CD14-positive monocyte (primary cell): ENCODE measurements at regions of chr5 and their contacts with region 1.

Region 1: DNA sequence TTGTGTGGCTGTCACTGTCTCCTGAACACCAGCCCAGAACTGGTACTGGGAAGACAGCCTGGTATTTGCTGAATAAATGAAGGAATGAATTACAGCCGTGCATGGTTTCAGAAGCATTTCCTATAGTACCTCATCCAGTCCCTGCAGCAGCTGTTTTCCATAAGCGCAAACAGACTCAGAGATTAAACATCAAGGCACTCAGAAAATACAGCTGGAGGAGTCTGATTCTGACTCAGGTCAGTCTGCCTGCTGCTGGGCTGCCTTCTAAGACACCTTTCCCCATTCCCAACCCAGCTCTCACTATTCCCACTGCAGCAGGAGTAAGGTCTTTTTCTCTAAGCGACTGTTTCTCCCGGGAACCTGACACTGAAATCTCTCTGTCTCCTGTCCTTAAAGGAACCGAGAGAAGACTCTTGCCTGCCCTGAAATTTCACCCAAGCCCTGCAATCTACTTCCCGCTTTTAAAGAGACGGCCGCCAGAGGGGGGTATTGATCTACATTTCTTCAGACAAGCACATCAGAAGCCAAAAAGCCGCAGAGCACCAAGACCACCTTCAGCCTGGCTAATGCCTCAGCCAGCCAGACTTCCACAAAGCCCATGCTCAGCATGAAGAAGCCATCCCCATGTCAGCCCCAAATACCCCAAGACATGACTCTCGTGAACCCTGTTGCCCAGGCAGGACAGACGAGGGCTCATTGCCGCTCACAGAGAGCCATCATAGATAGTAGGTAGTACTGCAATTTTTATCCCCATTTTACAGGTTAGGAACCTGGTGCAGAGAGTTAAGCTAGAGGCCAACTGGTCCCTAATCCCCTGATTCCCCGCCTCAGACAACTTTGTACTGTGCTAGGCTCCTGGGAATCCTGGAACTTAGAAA is 5.4 kb upstream of the FOXI1 start:
- DNase-seq: peak; percentile 51 to 71 (median 63)
- H3K4me3 ChIP-seq: no peak overlapping the region
- H3K4me3 Mint-ChIP-seq: no peak overlapping the region
- H3K27ac ChIP-seq: no peak overlapping the region
- H3K27ac Mint-ChIP-seq: no peak overlapping the region
- H3K4me1 ChIP-seq: peaks cover 30 to 33% of the 10 kb centered on the region in 2 donors
- H3K4me1 Mint-ChIP-seq: peaks cover 32% of the 10 kb centered on the region
- H3K27me3 ChIP-seq: no peaks in the 10 kb centered on the region
- H3K27me3 Mint-ChIP-seq: peaks cover 4 to 6% (median 4%) of the 10 kb centered on the region in 3 donors
- CTCF ChIP-seq: peak; percentile 77

Region 2: DNA sequence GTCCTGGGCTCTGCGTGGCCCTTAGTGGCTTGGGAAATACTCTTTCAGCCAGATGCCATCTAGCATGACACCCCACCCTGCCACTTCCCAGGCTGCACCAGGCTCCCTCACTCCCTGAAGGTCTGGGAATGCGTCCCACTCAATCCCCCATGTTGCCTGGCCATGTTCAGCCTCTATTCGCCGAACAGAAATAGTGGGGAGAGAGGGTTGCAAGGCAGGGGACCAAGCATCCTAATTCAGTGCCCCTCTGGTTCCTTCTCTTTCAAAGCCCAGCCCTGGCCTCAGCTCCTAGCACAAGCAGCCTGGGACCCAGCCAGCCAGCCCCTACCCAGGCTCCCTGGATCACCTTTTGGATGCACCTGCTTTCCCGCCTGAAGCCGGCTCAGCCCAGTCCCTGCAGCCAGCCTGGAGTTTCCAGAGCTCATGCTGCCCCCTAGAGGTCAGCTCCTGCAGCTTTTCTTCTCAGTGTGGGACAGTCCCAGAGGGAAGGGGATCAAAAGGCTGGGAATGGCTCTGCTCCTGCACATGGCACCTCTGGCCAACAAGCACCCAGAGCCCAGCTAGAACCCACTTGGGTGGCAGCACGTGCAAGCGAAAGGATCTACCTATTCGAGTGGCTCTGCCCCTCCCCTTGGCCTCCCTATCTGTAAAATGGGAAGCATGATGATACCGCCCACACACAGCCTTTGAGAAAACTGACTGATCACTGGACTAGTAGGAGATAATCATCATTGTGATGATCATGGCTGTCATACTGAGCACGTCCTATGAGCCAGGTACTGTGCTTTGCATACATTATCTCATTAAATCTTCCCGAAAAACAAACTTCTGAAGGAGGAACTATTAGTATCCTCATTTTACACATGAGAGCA is 83.7 kb after region 1 on chr5:
- intact Hi-C with region 1: loop called (anchors 2 kb)
- DNase-seq: peak; percentile 19 to 51 (median 51)
- H3K4me3 ChIP-seq: no peak overlapping the region
- H3K4me3 Mint-ChIP-seq: no peak overlapping the region
- H3K27ac ChIP-seq: no peak overlapping the region
- H3K27ac Mint-ChIP-seq: no peak overlapping the region
- H3K4me1 ChIP-seq: no peaks in the 10 kb centered on the region
- H3K4me1 Mint-ChIP-seq: peaks cover 2% of the 10 kb centered on the region
- H3K27me3 ChIP-seq: no peaks in the 10 kb centered on the region
- H3K27me3 Mint-ChIP-seq: peaks cover 0 to 7% (median 2%) of the 10 kb centered on the region in 3 donors
- CTCF ChIP-seq: peak; percentile 89

Region 3: DNA sequence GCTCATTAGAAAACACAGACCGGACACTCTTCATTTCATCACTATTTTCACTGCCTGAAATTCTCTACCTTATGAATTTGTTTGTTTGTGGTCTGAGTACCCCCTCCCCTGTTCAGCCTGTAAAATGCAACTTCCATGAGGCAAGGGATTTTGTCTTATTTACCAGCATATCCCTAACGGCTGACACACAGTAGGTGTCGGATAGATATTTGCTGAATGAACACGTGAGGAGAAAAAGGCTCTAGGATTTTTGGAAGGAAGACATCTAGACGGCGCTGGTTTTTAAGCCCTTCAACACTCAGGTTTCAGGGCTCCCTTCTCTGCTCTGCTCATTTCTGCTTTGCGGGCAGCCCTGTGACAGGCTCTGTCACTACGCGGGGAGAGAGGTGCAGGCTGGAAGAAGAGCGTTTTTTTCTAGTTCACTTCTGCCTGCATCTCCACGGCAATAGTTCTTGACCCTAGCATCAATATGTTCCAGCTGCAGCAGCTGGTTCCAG is 247.9 kb after region 1 on chr5:
- intact Hi-C with region 1: loop called in 1 of 2 experiments (anchors 10 kb)
- DNase-seq: peak in 2 of 3 donors; percentile 22 to 35
- H3K4me3 ChIP-seq: no peak overlapping the region
- H3K4me3 Mint-ChIP-seq: peak overlapping the region in 1 of 2 donors; percentile 46
- H3K27ac ChIP-seq: no peak overlapping the region
- H3K27ac Mint-ChIP-seq: peak overlapping the region in 4 of 7 donors; percentile 8 to 52 (median 36)
- H3K4me1 ChIP-seq: peaks cover 15 to 24% of the 10 kb centered on the region in 2 donors
- H3K4me1 Mint-ChIP-seq: peaks cover 36% of the 10 kb centered on the region
- H3K27me3 ChIP-seq: no peaks in the 10 kb centered on the region
- H3K27me3 Mint-ChIP-seq: peaks cover 0 to 1% (median under 1%) of the 10 kb centered on the region in 3 donors
- CTCF ChIP-seq: peak; percentile 38

Region 4: DNA sequence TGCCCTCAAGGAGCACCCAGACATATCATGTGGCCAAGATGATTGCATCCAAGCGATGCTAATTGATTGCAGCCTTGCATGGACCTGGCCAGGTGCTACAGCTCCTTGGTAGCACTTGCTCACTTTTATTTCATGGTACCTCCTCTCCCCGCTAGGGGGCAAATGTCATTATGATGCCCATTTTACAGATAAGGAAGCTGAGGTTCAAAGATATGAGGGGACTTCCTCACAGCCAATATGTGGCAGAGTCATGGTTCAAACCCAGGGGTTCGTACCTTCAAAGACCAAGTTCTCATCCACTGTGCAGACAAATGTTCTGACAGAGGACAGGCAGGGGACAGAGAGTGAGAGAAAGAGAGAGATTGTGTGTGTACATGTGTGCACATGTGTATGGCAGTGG is 310.8 kb after region 1 on chr5:
- intact Hi-C with region 1: loop called in 1 of 2 experiments (anchors 10 kb)
- DNase-seq: no peak
- H3K4me3 ChIP-seq: no peak overlapping the region
- H3K4me3 Mint-ChIP-seq: no peak overlapping the region
- H3K27ac ChIP-seq: no peak overlapping the region
- H3K27ac Mint-ChIP-seq: no peak overlapping the region
- H3K4me1 ChIP-seq: peaks cover 9 to 18% of the 10 kb centered on the region in 2 donors
- H3K4me1 Mint-ChIP-seq: peaks cover 18% of the 10 kb centered on the region
- H3K27me3 ChIP-seq: no peaks in the 10 kb centered on the region
- H3K27me3 Mint-ChIP-seq: peaks cover 0 to 3% (median 0%) of the 10 kb centered on the region in 3 donors
- CTCF ChIP-seq: no peak

Region 5: GRCh38 chr5:170429014-170429413 is 328.7 kb after region 1 on chr5:
- intact Hi-C with region 1: loop called in 1 of 2 experiments (anchors 5 kb)
- DNase-seq: no peak
- H3K4me3 ChIP-seq: no peak overlapping the region
- H3K4me3 Mint-ChIP-seq: no peak overlapping the region
- H3K27ac ChIP-seq: no peak overlapping the region
- H3K27ac Mint-ChIP-seq: peak overlapping the region in 1 of 7 donors; percentile 16
- H3K4me1 ChIP-seq: no peaks in the 10 kb centered on the region
- H3K4me1 Mint-ChIP-seq: peaks cover 13% of the 10 kb centered on the region
- H3K27me3 ChIP-seq: no peaks in the 10 kb centered on the region
- H3K27me3 Mint-ChIP-seq: peaks cover 0 to 7% (median 0%) of the 10 kb centered on the region in 3 donors
- CTCF ChIP-seq: no peak